Dorsolateral prefrontal cortex (tissue), 120 donors: ENCODE measurements at regions of chr5 and their contacts with region 1.

Region 1: GRCh38 chr5:181159286-181159829 is 12.0 kb downstream of the OR2V2 start:
- DNase-seq: peak; percentile 75 to 91 (median 90)
- H3K4me3 ChIP-seq: peak overlapping the region in 2 of 59 donors; percentile 1 to 20
- H3K27ac ChIP-seq: peak overlapping the region in 37 of 59 donors; percentile 57 to 97 (median 92)
- H3K27me3 ChIP-seq: peaks cover 0 to 7% (median 0%) of the 10 kb centered on the region in 45 donors
- CTCF ChIP-seq: peak; percentile 62 to 94 (median 86)

Region 2: GRCh38 chr5:180873615-180874520 is 285.5 kb before region 1 on chr5:
- intact Hi-C with region 1: loop called (anchors 10 kb)
- DNase-seq: peak in 1 of 10 donors; percentile 21
- H3K4me3 ChIP-seq: no peak overlapping the region
- H3K27ac ChIP-seq: peak overlapping the region in 5 of 59 donors; percentile 34 to 51 (median 49)
- H3K27me3 ChIP-seq: no peaks in the 10 kb centered on the region
- CTCF ChIP-seq: no peak